ENCODE measurements at regions of chr2 and their contacts with region 1.

Region 1: DNA sequence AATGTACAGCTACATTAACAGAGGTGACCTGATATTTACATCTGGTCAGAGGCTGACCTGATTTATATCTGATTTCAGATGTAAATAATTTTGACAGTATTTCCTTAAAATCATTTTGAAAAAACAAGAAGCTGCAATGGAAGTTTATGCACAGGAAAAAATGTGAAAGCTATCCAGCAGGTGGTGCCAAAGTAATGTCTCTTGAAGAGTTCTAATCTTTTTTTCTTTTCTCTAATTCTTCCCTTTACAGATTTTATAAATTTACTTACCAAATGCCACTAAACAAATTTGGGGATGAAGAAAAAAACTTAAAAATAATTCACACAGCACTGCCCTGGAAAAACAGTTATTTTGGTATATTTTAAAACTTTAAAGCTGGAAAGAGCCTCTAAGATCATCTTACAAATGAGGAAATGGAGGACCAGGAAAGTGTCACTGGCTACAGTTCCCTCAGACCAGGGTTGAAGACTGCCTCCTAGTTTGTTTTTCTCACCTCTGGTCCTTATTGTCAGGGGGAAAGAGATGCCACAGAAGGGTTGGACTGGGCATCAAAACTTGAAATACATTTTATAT is 16.4 kb upstream of the FBLN7 start:
- DNase-seq: peak; percentile 67
- H3K4me3 Mint-ChIP-seq: no peak overlapping the region
- H3K27ac Mint-ChIP-seq: no peak overlapping the region
- H3K4me1 Mint-ChIP-seq: peaks cover 2% of the 10 kb centered on the region
- H3K27me3 Mint-ChIP-seq: no peaks in the 10 kb centered on the region

Region 2: DNA sequence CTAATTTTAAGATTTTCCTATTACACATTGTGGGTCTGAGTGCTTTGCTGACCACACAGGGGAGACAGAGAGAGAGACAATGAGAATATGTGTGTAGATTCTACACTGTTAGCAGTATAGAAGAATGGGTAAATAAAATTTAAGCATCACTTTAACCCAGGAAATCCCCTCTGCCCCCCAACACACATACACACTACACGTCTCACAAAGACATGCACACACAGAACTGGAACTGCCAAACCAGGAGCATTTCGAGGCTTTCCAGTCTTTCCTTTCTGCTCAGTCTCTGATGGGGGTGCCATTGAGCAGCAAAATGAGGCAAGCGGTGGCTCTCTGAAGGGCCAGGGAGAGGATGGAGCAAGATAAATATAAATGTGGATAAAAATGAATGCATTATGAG is 220.9 kb before region 1 on chr2:
- CTCF ChIA-PET with region 1: no interaction called
- DNase-seq: no peak
- H3K4me3 Mint-ChIP-seq: no peak overlapping the region
- H3K27ac Mint-ChIP-seq: no peak overlapping the region
- H3K4me1 Mint-ChIP-seq: peaks cover 15% of the 10 kb centered on the region
- H3K27me3 Mint-ChIP-seq: peaks cover 82% of the 10 kb centered on the region

Region 3: DNA sequence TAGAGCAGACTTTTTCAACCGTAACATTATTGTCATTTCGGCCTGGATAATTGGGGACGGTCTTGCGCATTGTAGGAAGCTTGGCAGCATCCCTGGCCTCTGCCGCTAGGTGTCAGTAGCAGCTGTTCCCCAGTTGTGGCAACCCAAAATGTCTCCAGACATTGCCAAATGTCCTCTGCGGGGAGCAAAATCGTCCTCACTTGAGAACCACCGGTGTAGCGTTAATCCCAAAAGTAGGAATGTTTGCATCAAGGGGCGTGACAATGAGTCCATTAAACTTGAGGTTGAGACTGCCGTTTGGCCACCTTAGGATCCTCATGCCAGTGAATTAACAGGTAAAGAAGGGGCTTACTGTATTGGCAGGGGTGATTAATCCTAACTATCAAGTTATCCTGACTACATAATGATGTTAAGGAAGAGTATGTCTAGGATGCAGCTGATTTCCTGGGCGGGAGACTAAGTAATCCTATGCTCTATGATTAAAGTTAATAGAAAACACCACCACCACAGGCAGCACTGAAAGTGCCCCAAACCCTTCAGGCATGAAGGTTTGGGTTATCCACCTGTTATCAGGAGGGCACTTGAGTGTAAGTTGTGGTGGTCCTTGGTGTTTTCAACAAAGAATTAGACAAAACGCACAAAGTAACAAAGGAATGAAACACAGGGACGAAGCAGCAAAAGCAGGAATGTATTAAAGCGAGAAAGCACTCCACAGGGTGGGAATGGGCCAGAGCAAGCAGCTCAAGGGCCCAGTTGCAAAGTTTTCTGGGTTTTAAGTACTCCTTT is 137.9 kb after region 1 on chr2:
- CTCF ChIA-PET with region 1: interaction called, 23 read pairs
- DNase-seq: peak; percentile 90
- H3K4me3 Mint-ChIP-seq: peak overlapping the region; percentile 36
- H3K27ac Mint-ChIP-seq: no peak overlapping the region
- H3K4me1 Mint-ChIP-seq: peaks cover 21% of the 10 kb centered on the region
- H3K27me3 Mint-ChIP-seq: peaks cover 9% of the 10 kb centered on the region

Region 4: DNA sequence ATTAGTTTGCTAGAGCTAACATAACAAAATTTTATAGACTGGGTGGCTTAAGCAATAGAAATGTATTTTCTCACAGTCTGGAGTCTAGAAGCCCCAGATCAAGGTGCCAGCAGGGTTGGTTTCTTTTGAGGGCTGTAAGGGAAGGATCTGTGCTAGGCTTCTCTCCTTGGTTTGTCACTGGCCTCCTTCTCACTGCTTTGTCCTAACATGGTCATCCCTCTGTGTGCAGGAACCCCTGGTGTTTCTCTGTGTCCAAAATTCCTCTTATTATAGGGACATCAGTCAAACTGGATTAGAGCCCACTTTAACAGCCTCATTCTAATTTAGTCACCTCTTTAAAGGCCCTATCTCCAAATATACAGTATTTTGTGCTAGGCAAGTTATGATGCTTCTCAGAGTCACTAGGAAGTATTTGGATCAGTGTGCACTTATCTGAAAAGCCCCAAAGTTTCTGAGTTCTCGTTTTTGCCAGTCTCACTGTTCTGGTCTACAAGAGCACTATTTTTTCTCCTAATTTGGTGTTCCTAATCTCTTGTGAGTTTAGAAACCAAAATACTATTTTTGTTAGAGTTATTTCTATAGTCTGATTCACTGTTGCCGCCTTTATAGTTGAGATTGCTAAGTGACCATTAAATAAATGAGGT is 182.7 kb after region 1 on chr2:
- CTCF ChIA-PET with region 1: no interaction called
- DNase-seq: no peak
- H3K4me3 Mint-ChIP-seq: no peak overlapping the region
- H3K27ac Mint-ChIP-seq: no peak overlapping the region
- H3K4me1 Mint-ChIP-seq: no peaks in the 10 kb centered on the region
- H3K27me3 Mint-ChIP-seq: no peaks in the 10 kb centered on the region

Region 5: DNA sequence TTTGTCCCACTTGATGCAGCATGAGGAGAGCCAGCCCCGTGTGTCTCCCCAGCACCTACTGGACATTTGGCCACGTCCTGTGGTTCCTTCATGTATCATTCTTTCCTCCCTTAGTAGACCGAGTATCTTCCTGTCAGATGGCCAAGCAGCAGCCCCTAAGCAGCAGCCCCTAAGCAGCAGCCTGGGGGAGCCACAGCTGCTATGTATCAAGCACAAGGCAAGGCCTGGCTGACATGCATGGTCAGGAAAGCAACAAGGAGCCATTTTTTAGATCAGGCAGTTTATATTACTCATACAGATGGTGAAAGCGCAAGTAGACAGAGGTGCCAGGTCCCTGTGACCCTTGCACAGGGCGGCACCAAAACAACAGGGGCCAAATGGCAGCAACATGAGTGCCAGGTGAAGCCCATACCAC is 484.7 kb after region 1 on chr2:
- CTCF ChIA-PET with region 1: no interaction called
- DNase-seq: no peak
- H3K4me3 Mint-ChIP-seq: no peak overlapping the region
- H3K27ac Mint-ChIP-seq: no peak overlapping the region
- H3K4me1 Mint-ChIP-seq: no peaks in the 10 kb centered on the region
- H3K27me3 Mint-ChIP-seq: peaks cover 16% of the 10 kb centered on the region

Measured in activated naive CD4-positive, alpha-beta T cell treated with anti-CD3 and anti-CD28 coated beads, Interleukin-2, amount 10 ng/mL, durations not matched to agents 7 days and 5 days (primary cell).